Breast epithelium (tissue), 4 donors: ENCODE measurements at regions of chr21 and their contacts with region 1.

Region 1: GRCh38 chr21:32658524-32658923 is 46.3 kb upstream of the CFAP298 start:
- DNase-seq: no peak
- H3K4me3 ChIP-seq: no peak overlapping the region
- H3K27ac ChIP-seq: no peak overlapping the region
- H3K4me1 ChIP-seq: no peaks in the 10 kb centered on the region
- H3K27me3 ChIP-seq: no peaks in the 10 kb centered on the region
- CTCF ChIP-seq: no peak
- POLR2A ChIP-seq: no peak

Region 2: GRCh38 chr21:32190493-32191144 is 467.9 kb before region 1 on chr21:
- intact Hi-C with region 1: loop called (anchors 5 kb)
- DNase-seq: no peak
- H3K4me3 ChIP-seq: no peak overlapping the region
- H3K27ac ChIP-seq: no peak overlapping the region
- H3K4me1 ChIP-seq: no peaks in the 10 kb centered on the region
- H3K27me3 ChIP-seq: no peaks in the 10 kb centered on the region
- CTCF ChIP-seq: no peak
- POLR2A ChIP-seq: no peak

Region 3: DNA sequence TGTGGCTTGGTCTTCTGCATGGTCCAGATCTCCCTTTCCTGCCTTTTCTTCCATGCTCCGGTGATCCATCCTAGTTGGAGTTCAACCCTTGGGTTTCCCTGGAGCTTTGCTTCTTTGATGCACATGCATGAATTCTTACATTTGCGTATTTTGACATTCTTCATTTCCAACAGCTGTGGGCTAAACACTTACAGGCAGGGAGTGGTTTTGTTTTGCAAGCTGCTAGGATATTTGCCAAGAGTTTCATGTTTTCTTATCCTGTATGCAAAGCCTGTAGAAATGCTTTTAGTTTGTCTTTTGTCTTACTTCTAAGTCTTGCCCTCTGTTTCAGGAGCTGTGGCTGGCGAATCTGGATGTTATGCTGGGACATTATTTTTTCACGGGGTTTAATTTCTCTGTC is 203.3 kb after region 1 on chr21:
- intact Hi-C with region 1: no loop called
- DNase-seq: no peak
- H3K4me3 ChIP-seq: no peak overlapping the region
- H3K27ac ChIP-seq: no peak overlapping the region
- H3K4me1 ChIP-seq: no peaks in the 10 kb centered on the region
- H3K27me3 ChIP-seq: no peaks in the 10 kb centered on the region
- CTCF ChIP-seq: no peak
- POLR2A ChIP-seq: no peak